ENCODE measurements at regions of chr17 and their contacts with region 1.

Region 1: DNA sequence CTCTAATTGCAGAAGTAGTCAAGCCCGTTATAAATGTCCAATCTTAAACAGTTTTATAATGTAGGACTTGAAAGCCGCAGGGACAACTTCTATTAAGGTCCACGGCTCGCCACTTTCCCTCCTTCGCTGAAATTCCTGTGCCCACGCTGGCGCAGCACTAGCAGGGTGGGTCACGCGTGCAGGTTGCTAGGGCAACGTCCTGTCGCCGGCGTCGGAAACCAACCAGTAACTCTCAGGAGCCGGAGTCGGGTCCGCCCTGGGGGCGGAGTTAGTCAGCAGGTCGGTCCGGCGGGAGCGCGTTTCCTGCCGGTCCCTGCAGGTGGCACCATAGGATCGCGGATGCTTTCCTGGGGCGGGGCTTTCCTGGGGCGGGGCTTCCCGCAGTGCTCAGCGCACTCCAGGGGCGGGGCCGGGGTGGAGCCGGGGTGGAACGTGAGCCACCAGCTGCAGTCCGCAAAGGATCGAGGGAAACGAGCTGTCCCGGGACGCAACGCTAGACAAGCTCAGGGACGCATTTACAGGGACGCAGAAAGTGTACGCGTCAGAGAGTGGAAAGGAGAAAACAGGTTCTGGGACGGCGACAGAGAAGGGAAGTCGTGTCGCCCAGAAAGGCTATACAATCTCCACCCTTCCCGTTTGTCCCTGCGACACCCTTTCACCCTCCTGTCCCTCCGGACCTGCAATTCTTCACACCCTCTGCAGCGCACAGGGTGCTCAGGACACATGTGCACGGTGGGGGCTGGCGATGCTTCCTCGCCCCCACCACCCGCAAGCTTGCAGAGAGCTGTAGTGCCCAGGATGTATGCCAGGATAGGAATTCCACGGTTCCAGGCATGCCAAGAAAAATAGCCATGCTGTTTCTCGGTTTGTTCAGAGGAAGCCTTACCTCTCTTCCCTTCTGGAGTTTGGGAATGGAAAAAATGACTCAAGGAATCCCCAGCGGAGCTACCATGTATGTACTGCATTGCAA is 12.4 kb downstream of the COPZ2 start:
- DNase-seq: peak; percentile 95 to 97 (median 96)
- ATAC-seq: peak; percentile 94
- H3K4me3 ChIP-seq: peak overlapping the region; percentile 41
- H3K27ac ChIP-seq: peak overlapping the region; percentile 8; the same call in 1 of the 3 replicates
- H3K4me1 ChIP-seq: peaks cover 23 to 39% of the 10 kb centered on the region in 2 experiments; a peak in 4 of 5 replicates
- H3K27me3 ChIP-seq: no peaks in the 10 kb centered on the region
- CTCF ChIP-seq: peak; percentile 83 to 96 (median 91)
- EP300 ChIP-seq: no peak
- POLR2A ChIP-seq: no peak
- RAD21 ChIP-seq: peak; percentile 84 to 92

Region 2: GRCh38 chr17:47810205-47810821 is 214.9 kb before region 1 on chr17:
- CTCF ChIA-PET with region 1: no interaction called
- POLR2A ChIA-PET with region 1: no interaction called
- in situ Hi-C with region 1: no loop called
- intact Hi-C with region 1: no loop called
- DNase-seq: peak; percentile 63 to 82 (median 70)
- ATAC-seq: peak; percentile 86
- H3K4me3 ChIP-seq: no peak overlapping the region
- H3K27ac ChIP-seq: peak overlapping the region; percentile 77
- H3K4me1 ChIP-seq: peaks cover 22 to 39% of the 10 kb centered on the region in 2 experiments
- H3K27me3 ChIP-seq: no peaks in the 10 kb centered on the region
- CTCF ChIP-seq: no peak
- EP300 ChIP-seq: peak; percentile 50; the same call in 1 of the 2 replicates
- POLR2A ChIP-seq: no peak
- RAD21 ChIP-seq: no peak

Region 3: GRCh38 chr17:48068491-48068961 is 43.3 kb after region 1 on chr17:
- CTCF ChIA-PET with region 1: interaction called, 54 read pairs
- POLR2A ChIA-PET with region 1: interaction called, 6 read pairs
- in situ Hi-C with region 1: loop called (anchors 5 kb)
- intact Hi-C with region 1: no loop called
- DNase-seq: peak in 3 of 4 experiments; percentile 30 to 50 (median 34)
- ATAC-seq: peak; percentile 86
- H3K4me3 ChIP-seq: no peak overlapping the region
- H3K27ac ChIP-seq: no peak overlapping the region
- H3K4me1 ChIP-seq: peaks cover 0 to 3% of the 10 kb centered on the region in 2 experiments; a peak in 1 of 5 replicates
- H3K27me3 ChIP-seq: no peaks in the 10 kb centered on the region
- CTCF ChIP-seq: peak in 2 of 3 experiments; percentile 49 to 51; a peak in 3 of 6 replicates
- EP300 ChIP-seq: no peak
- POLR2A ChIP-seq: no peak
- RAD21 ChIP-seq: 0 out of 4 replicates have a peak, but pooled peaks of 1 of the 2 experiments have one; percentile 22

Region 4: GRCh38 chr17:48131216-48131824 is 106.1 kb after region 1 on chr17:
- CTCF ChIA-PET with region 1: interaction called, 38 read pairs
- POLR2A ChIA-PET with region 1: interaction called, 5 read pairs
- in situ Hi-C with region 1: no loop called
- intact Hi-C with region 1: loop called (anchors 1 kb)
- DNase-seq: peak; percentile 70 to 81 (median 74)
- ATAC-seq: peak; percentile 96
- H3K4me3 ChIP-seq: no peak overlapping the region
- H3K27ac ChIP-seq: no peak overlapping the region
- H3K4me1 ChIP-seq: no peaks in the 10 kb centered on the region
- H3K27me3 ChIP-seq: no peaks in the 10 kb centered on the region; a peak in 1 of 5 replicates
- CTCF ChIP-seq: peak; percentile 80 to 92 (median 83)
- EP300 ChIP-seq: no peak
- POLR2A ChIP-seq: no peak
- RAD21 ChIP-seq: peak; percentile 69 to 90

Region 5: GRCh38 chr17:48259694-48260291 is 234.6 kb after region 1 on chr17:
- CTCF ChIA-PET with region 1: interaction called, 3 read pairs
- POLR2A ChIA-PET with region 1: no interaction called
- in situ Hi-C with region 1: no loop called
- intact Hi-C with region 1: loop called (anchors 10 kb)
- DNase-seq: peak; percentile 21 to 75 (median 34)
- ATAC-seq: peak; percentile 43; the same call in 2 of the 3 replicates
- H3K4me3 ChIP-seq: no peak overlapping the region
- H3K27ac ChIP-seq: no peak overlapping the region
- H3K4me1 ChIP-seq: peaks cover 0 to 12% of the 10 kb centered on the region in 2 experiments; a peak in 3 of 5 replicates
- H3K27me3 ChIP-seq: no peaks in the 10 kb centered on the region
- CTCF ChIP-seq: peak; percentile 73 to 91 (median 77)
- EP300 ChIP-seq: no peak
- POLR2A ChIP-seq: no peak
- RAD21 ChIP-seq: peak; percentile 68 to 76